Panc1 (cell line): ENCODE measurements at regions of chr12 and their contacts with region 1.

Region 1: DNA sequence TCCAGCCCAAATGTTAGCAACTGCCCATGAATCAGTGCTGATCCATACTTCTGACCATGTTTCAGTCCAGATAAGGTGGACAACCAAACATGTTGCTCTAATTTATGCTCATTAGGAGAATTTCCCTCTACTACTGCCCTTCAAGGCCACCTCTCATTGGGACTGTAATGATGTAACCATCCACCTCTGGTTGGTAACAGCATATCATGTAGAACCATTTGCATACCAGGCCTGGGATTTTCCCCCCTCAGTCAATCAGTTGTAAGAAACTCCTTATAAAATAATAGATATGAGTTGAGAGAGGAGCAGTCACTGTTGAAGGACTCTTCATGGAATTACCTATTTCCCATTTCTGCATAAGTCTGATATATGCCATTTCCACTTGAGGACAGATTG is 17.8 kb upstream of the YAF2 start:
- DNase-seq: no peak
- ATAC-seq: no peak
- H3K4me3 ChIP-seq: no peak overlapping the region
- H3K27ac ChIP-seq: no peak overlapping the region
- H3K4me1 ChIP-seq: no peaks in the 10 kb centered on the region
- H3K27me3 ChIP-seq: no peaks in the 10 kb centered on the region
- CTCF ChIP-seq: no peak

Region 2: DNA sequence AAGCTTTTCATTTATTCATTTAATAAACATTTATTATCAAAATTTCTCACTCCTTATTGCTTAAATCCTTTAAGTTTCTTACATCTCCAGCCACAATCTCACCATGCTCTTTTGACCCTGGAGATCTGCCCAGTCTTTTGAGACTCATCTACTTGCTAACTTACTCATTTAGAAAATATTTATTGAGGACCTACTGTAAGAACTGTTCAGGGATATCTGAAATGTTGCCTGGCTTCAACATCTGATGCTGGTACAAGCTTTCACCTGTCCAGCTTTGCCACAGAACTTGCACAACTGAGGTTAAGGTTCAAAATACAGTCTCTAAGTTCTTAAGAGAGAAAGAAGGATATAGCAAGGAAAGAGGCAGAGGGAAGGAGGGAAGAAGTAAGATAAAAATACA is 93.7 kb before region 1 on chr12:
- CTCF ChIA-PET with region 1: no interaction called
- POLR2A ChIA-PET with region 1: no interaction called
- in situ Hi-C with region 1: no loop called
- intact Hi-C with region 1: no loop called
- DNase-seq: no peak
- ATAC-seq: no peak
- H3K4me3 ChIP-seq: no peak overlapping the region
- H3K27ac ChIP-seq: no peak overlapping the region
- H3K4me1 ChIP-seq: peaks cover 6% of the 10 kb centered on the region; the same call in 1 of the 2 replicates
- H3K27me3 ChIP-seq: no peaks in the 10 kb centered on the region
- CTCF ChIP-seq: no peak

Region 3: GRCh38 chr12:42421844-42422779 is 166.2 kb after region 1 on chr12:
- CTCF ChIA-PET with region 1: interaction called, 13 read pairs
- POLR2A ChIA-PET with region 1: no interaction called
- in situ Hi-C with region 1: no loop called
- intact Hi-C with region 1: no loop called
- DNase-seq: no peak
- ATAC-seq: no peak
- H3K4me3 ChIP-seq: no peak overlapping the region
- H3K27ac ChIP-seq: no peak overlapping the region
- H3K4me1 ChIP-seq: peaks cover 4% of the 10 kb centered on the region; the same call in 1 of the 2 replicates
- H3K27me3 ChIP-seq: no peaks in the 10 kb centered on the region
- CTCF ChIP-seq: no peak